Aorta (tissue), 5 donors: ENCODE measurements at regions of chr2 and their contacts with region 1.

Region 1: GRCh38 chr2:177148477-177149154 is 64.0 kb upstream of the HNRNPA3 start:
- DNase-seq: peak; percentile 75 to 86
- ATAC-seq: peak; percentile 91
- H3K4me3 ChIP-seq: peak overlapping the region; percentile 37 to 41
- H3K27ac ChIP-seq: no peak overlapping the region
- H3K4me1 ChIP-seq: no peaks in the 10 kb centered on the region
- H3K27me3 ChIP-seq: peaks cover 0 to 5% of the 10 kb centered on the region in 2 donors

Region 2: GRCh38 chr2:176118601-176119339 is 1029.8 kb before region 1 on chr2:
- intact Hi-C with region 1: loop called in 1 of 2 experiments (anchors 5 kb)
- DNase-seq: no peak
- ATAC-seq: no peak
- H3K4me3 ChIP-seq: no peak overlapping the region
- H3K27ac ChIP-seq: no peak overlapping the region
- H3K4me1 ChIP-seq: no peaks in the 10 kb centered on the region
- H3K27me3 ChIP-seq: no peaks in the 10 kb centered on the region

Region 3: GRCh38 chr2:176653479-176654443 is 494.9 kb before region 1 on chr2:
- intact Hi-C with region 1: loop called in 1 of 2 experiments (anchors 10 kb)
- DNase-seq: peak; percentile 67 to 82
- ATAC-seq: peak; percentile 89
- H3K4me3 ChIP-seq: no peak overlapping the region
- H3K27ac ChIP-seq: no peak overlapping the region
- H3K4me1 ChIP-seq: no peaks in the 10 kb centered on the region
- H3K27me3 ChIP-seq: no peaks in the 10 kb centered on the region

Region 4: GRCh38 chr2:177195194-177195593 is 46.6 kb after region 1 on chr2:
- intact Hi-C with region 1: no loop called
- DNase-seq: no peak
- ATAC-seq: no peak
- H3K4me3 ChIP-seq: no peak overlapping the region
- H3K27ac ChIP-seq: no peak overlapping the region
- H3K4me1 ChIP-seq: no peaks in the 10 kb centered on the region
- H3K27me3 ChIP-seq: no peaks in the 10 kb centered on the region

Region 5: GRCh38 chr2:177254433-177255226 is 106.0 kb after region 1 on chr2:
- intact Hi-C with region 1: no loop called
- DNase-seq: no peak
- ATAC-seq: no peak
- H3K4me3 ChIP-seq: no peak overlapping the region
- H3K27ac ChIP-seq: no peak overlapping the region
- H3K4me1 ChIP-seq: peaks cover 13 to 17% of the 10 kb centered on the region in 2 donors
- H3K27me3 ChIP-seq: no peaks in the 10 kb centered on the region

Region 6: GRCh38 chr2:177618255-177619253 is 469.9 kb after region 1 on chr2:
- intact Hi-C with region 1: loop called in 1 of 2 experiments (anchors 10 kb)
- DNase-seq: peak; percentile 96 to 97
- ATAC-seq: peak; percentile 98
- H3K4me3 ChIP-seq: peak overlapping the region; percentile 50 to 66
- H3K27ac ChIP-seq: peak overlapping the region in 1 of 2 donors; percentile 85
- H3K4me1 ChIP-seq: no peaks in the 10 kb centered on the region
- H3K27me3 ChIP-seq: no peaks in the 10 kb centered on the region